ENCODE measurements at regions of chr12 and their contacts with region 1.

Region 1: DNA sequence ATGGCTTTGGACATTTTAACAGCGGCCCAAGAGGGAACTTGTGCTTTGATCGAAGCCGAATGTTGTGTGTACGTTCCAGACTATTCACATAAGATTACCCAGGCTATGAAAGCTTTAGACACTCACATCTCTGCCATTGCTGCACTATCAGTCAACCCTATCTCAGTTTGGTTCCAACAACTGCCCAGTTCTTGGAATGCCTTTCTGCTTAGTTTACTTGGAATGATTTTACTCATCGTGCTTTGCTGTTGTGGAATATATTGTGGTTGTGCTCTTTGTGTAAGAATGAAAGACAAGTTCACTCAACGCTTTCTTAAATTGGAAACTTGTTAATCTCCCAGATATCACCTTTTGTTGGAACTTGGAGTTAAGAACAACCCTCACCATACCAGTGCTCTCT is 498.2 kb downstream of the GLT1D1 start:
- DNase-seq: no peak
- ATAC-seq: no peak
- H3K4me3 ChIP-seq: no peak overlapping the region
- H3K27ac ChIP-seq: no peak overlapping the region
- H3K4me1 ChIP-seq: no peaks in the 10 kb centered on the region
- H3K27me3 ChIP-seq: peaks cover 0 to 2% (median 0%) of the 10 kb centered on the region in 3 donors
- CTCF ChIP-seq: no peak

Region 2: GRCh38 chr12:129231491-129231890 is 120.0 kb before region 1 on chr12:
- intact Hi-C with region 1: no loop called
- DNase-seq: no peak
- ATAC-seq: no peak
- H3K4me3 ChIP-seq: no peak overlapping the region
- H3K27ac ChIP-seq: no peak overlapping the region
- H3K4me1 ChIP-seq: no peaks in the 10 kb centered on the region
- H3K27me3 ChIP-seq: no peaks in the 10 kb centered on the region
- CTCF ChIP-seq: no peak

Region 3: GRCh38 chr12:129401572-129401971 is 50.1 kb after region 1 on chr12:
- intact Hi-C with region 1: loop called in 1 of 2 experiments (anchors 5 kb)
- DNase-seq: no peak
- ATAC-seq: no peak
- H3K4me3 ChIP-seq: no peak overlapping the region
- H3K27ac ChIP-seq: no peak overlapping the region
- H3K4me1 ChIP-seq: no peaks in the 10 kb centered on the region
- H3K27me3 ChIP-seq: no peaks in the 10 kb centered on the region
- CTCF ChIP-seq: no peak

Region 4: DNA sequence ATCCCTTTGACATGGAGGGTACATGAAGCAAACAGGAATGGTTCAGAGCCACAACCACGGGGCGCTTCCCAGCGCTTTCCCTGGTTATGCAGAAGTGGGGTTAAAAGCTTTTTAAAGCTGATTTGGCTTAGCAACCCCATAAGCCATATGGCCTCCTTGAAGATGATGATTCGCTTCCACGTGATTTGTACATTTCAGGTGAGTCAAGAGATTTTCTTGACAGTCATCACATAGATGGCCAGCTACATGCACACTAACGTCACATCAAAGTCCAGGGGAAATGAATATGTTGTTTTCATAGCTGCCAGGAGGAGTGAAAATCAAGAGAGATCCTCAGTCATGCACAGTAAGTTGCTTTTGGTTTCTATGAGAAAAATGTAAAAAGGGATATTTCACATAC is 242.6 kb after region 1 on chr12:
- intact Hi-C with region 1: no loop called
- DNase-seq: no peak
- ATAC-seq: no peak
- H3K4me3 ChIP-seq: no peak overlapping the region
- H3K27ac ChIP-seq: no peak overlapping the region
- H3K4me1 ChIP-seq: no peaks in the 10 kb centered on the region
- H3K27me3 ChIP-seq: no peaks in the 10 kb centered on the region
- CTCF ChIP-seq: no peak